Heart left ventricle (tissue), 16 donors: ENCODE measurements at regions of chr12 and their contacts with region 1.

Region 1: DNA sequence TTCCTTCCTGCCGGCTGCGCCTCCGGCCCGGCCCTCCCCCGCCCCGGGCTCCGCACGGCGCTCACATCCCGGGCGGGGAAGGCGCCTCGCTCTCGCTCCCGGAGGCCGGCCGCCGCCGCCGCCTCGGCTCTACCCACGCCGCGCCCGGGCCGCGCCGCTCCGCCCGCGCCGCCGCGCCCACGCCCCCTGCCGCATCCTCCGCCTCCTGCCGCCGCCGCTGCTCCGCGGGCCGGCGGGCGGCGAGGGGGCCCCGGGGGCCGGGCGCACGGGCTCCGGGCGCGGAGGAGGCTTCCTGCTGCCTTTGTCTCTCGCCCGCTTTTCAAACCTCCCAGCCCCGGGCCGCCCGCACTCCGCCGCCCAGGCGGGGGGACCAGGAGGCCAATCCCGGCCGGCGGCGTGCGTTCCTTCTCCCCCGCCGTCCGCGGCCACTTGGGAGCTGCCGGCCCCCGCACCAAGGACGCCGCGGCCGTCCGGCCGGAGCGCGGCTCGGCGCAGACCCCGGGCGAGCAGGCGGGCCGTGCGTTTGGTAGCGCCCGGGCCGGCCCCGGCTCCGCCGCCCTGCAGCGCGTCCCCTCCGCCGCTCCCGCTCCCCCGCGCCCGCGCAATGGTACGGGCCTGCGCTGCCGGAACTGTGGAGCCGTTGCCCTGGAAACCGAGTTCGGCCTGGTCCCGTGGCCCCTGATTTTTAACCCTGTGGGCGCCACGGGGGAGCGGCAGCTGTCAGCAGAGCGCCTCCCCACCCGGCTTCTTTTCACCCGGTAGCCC is at the start of gene FBXL14:
- DNase-seq: peak; percentile 93 to 95 (median 94)
- ATAC-seq: peak; percentile 74 to 83 (median 82)
- H3K4me3 ChIP-seq: peak within 1 kb of the TSS; percentile 58 to 99 (median 86)
- H3K27ac ChIP-seq: peak within 1 kb of the TSS; percentile 87 to 97 (median 93)
- H3K4me1 ChIP-seq: peaks cover 0 to 53% (median 39%) of the 10 kb centered on the region in 12 donors
- H3K27me3 ChIP-seq: no peaks in the 10 kb centered on the region
- CTCF ChIP-seq: peak in 1 of 12 donors; percentile 7
- POLR2A ChIP-seq: peak in 1 of 2 donors; percentile 40
- total RNA-seq, gene FBXL14: 4.7 to 10.1 (median 8.4) TPM

Region 2: GRCh38 chr12:810671-811415 is 783.6 kb before region 1 on chr12:
- intact Hi-C with region 1: loop called in 1 of 10 experiments (anchors 10 kb)
- DNase-seq: no peak
- ATAC-seq: peak in 2 of 4 donors; percentile 11 to 21
- H3K4me3 ChIP-seq: no peak overlapping the region
- H3K27ac ChIP-seq: peak overlapping the region in 1 of 12 donors; percentile 13
- H3K4me1 ChIP-seq: peaks cover 9 to 71% (median 44%) of the 10 kb centered on the region in 12 donors
- H3K27me3 ChIP-seq: no peaks in the 10 kb centered on the region
- CTCF ChIP-seq: no peak
- POLR2A ChIP-seq: no peak

Region 3: DNA sequence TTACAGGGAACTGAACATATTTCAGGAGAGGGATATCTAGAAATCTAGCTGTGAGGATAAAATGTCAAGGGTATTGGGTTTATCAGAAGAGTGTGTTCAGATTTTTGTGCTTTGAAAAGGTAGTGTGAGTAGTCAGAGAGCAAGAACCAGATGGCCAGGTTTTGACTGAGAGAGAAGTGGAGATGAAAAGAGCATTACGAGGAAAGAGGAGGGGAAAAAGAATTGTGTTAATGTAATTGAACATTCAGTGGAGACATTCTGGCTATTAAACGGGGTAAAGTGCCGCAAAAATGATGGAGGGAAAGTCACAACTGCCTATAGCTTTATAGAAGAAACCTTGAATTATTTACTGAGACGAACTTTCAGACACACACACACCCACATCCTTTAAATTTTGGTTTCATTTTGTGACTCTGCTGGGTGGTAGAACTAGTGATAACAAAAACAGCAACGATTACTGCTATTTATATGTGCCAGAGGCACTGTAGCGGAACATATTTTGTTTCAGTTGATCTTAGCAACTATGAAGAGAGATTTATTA is 389.8 kb before region 1 on chr12:
- intact Hi-C with region 1: loop called in 2 of 10 experiments (anchors 5 to 10 kb)
- DNase-seq: no peak
- ATAC-seq: peak; percentile 34 to 65 (median 46)
- H3K4me3 ChIP-seq: peak overlapping the region; percentile 3 to 62 (median 51)
- H3K27ac ChIP-seq: peak overlapping the region; percentile 65 to 87 (median 79)
- H3K4me1 ChIP-seq: peaks cover 0 to 49% (median 17%) of the 10 kb centered on the region in 12 donors
- H3K27me3 ChIP-seq: no peaks in the 10 kb centered on the region
- CTCF ChIP-seq: no peak
- POLR2A ChIP-seq: no peak